AG04449 (cell line): ENCODE measurements at regions of chr11 and their contacts with region 1.

Region 1: DNA sequence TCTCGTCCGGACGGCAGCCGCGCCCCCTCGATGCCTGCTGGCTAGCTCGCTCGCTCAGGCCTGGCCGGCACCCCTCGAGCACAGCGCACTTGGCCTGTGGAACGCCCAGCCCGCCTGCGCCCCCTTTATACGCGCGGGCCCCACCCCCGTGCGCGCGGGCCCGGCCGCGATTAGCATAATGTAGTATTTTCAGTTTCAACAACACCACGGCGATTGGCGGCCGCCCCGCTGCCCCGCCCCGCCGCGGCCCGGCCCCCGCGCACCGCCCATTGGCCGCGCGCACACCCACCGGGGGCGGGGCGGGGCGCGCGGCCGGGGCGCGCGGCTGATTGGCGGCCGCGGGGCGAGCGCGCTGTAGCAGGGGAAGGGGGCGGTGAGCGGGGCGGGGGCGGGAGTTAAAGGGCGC is at the start of gene CDKN1C:
- DNase-seq: no peak
- H3K4me3 ChIP-seq: peak within 1 kb of the TSS; percentile 63
- CTCF ChIP-seq: no peak

Region 2: DNA sequence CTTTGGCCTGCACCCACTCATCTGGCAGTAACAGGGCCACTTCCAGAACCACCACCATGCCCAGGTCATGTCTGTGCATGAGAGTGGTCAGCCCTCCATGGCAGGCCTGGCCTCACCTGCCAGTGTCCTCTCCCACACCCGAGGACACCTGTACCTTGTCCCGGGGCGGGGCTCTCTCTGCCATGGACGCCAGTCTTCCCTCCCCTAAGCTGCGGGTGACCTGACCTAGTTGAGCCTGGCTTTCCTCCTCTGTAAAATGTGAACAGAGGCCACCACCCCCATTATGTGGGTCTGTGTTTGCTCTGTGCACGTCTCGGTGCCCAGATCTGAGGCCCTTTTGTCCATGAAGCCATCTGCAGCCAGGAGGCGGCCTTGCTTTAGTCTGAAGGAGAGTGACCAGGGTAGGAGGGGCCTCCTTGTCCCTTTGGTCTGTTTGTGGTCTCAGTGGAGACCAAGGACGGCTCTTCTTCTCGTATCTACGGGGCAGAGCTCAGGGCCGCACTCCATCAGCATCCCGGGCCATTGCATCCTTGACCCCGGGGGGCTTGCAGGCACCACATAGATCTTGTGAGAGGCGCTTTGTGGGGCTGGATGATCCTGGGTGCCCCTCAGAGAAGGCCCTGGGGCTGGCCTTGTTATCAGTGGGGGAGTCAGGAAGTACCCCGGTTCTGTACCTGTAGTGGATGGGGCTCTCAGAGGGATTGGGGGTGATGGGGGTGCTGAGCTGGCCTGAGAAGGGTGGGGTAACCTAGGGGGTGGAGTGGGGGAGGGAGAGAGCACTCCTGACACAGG is 319.3 kb before region 1 on chr11:
- CTCF ChIA-PET with region 1: interaction called, 11 read pairs
- POLR2A ChIA-PET with region 1: no interaction called
- DNase-seq: no peak
- H3K4me3 ChIP-seq: no peak overlapping the region
- CTCF ChIP-seq: no peak

Region 3: GRCh38 chr11:2674658-2675131 is 211.0 kb before region 1 on chr11:
- CTCF ChIA-PET with region 1: interaction called, 19 read pairs
- POLR2A ChIA-PET with region 1: no interaction called
- DNase-seq: no peak
- H3K4me3 ChIP-seq: no peak overlapping the region
- CTCF ChIP-seq: no peak

Region 4: DNA sequence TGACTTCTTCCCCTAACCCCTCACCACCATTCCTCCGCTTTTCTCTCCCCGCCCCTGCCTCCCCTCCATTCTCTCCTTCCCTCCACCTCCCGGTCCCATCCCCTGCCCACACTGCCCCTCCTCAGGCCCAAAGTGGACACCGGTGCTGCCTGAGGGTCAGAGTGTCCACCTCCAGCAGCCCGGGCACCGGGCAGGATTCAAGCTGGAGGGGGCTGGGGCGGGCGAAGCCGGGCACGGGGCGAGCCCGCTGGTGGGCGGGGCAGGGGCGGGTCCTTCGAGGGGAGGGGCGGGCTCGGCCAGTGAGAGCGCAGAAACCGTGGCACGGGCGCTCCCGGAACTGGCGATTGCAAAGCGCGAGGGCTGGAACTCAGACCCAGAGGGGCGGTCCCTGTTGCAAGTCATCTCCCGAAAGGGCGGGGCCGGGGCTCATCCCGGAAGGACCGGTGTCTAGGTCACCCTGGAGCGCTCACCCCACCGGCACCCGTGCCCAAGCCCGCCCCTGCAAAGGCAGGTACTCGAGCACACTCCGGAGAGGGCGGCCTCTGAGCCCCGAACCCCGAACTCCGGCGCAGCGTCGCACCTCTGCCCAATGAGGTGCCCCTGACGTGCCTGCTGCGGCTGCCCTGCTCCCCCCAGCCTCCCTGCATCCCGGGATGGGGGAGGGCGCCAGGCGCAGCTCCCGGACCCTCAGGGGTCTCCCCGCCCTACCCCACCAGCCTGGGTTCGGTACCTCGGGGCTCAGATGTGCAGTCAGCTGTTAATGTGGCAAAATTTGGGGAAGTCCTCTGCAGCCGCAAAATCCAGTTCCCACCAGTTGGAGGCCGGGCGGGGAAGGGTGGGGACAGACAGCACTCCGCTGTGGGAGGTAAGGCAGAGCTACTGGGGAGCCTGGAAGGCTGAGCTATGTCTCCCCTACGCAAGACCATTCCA is 16.4 kb after region 1 on chr11:
- CTCF ChIA-PET with region 1: interaction called, 35 read pairs
- POLR2A ChIA-PET with region 1: no interaction called
- DNase-seq: peak; percentile 42
- H3K4me3 ChIP-seq: peak overlapping the region; percentile 75
- CTCF ChIP-seq: no peak